ENCODE measurements at regions of chr22 and their contacts with region 1.

Region 1: DNA sequence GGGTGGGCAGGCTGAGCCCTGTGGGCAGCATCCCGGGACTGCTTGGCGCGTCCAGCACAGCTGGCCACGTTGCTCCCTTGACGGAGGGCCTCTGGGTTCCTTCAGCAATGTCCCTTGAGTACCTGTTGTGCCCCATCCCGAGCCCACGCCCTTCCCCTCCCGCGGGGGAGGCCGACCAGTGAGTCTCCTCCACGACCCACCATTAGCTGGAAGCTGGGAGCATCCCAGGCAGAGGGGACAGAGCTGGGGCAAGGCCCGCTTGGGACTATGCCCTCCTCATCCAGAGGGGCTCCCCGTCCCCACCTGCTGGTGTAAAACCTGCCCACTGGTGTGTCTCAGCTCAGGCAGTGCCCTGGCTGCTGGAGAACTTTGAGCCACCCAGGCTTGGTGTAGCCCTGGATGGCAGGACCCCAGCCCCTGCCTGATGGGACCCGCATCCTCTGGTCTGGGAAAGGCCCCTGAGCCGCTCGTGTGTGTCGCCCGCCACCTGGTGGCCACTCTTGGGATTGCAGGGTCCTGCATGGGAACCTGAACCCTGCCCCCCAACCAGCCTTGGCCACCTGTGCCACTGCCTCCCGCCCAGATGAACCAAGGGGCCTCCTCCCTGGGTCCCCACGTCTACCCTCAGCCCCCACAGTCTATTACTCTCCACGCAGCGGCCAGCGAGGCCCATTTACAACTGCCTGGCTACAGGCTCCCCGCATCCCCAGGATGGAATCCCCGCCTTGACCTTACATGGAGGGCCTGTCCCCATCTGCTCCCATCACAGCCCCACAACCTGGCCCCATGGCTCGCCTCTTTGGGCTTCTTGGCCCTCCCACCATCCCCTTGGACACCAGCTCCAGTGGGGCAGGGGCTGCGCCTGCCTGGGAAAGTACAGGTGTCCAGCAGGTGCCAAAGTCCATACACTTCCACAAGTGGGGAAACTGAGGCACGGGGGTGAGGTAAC is 16.6 kb upstream of the ARHGAP8 start:
- DNase-seq: peak; percentile 70 to 76 (median 73)
- ATAC-seq: peak; percentile 82
- H3K4me3 ChIP-seq: no peak overlapping the region
- H3K27ac ChIP-seq: no peak overlapping the region
- H3K4me1 ChIP-seq: peaks cover 0 to 50% of the 10 kb centered on the region in 2 experiments; a peak in 2 of 5 replicates
- H3K27me3 ChIP-seq: no peaks in the 10 kb centered on the region
- CTCF ChIP-seq: peak; percentile 75 to 85 (median 77)
- EP300 ChIP-seq: no peak
- POLR2A ChIP-seq: no peak; the same call in 1 of the 2 replicates
- RAD21 ChIP-seq: peak; percentile 41 to 77

Region 2: DNA sequence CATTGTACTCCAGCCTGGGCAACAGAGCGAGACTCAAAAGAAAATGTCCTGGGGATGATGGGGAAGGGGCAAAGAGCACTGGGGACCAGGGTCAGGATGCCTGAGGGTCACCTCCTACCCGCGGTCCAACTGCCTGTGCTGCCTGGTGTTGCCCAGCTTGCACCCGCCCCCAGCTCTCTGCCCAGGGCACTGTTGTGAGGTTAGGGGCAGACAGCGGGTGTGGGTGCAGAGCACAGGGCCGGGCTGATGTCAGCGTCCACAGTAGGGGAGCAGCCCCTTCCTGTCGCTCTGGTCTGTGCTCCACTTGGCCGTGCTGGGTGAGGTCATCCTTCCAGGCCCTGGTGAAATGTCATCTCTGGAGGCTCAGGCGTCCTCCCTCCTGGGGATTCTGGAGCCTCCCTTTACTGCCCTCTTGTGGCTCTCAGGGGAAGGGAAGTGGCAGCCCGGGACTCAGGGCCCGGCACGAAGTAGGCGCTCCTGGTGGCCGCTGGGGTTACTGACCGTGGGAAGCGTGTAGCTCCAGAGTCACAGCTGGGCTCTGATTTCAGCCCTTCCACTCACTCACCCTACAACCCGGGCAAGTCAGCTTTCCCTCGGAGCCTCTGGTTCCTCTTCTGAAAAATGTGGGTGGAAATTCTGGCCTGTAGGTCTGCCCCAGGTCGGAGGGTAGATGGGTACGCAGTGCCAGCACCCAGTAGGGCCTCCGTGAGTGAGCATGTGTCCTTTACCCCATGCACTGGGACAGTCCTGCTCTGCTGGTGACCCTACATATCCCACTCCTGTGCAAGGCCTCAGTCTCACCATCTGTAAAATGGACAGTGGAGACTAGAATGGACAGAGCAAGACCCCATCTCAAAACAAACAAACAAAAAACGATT is 51.1 kb before region 1 on chr22:
- CTCF ChIA-PET with region 1: interaction called, 22 read pairs
- POLR2A ChIA-PET with region 1: no interaction called
- in situ Hi-C with region 1: no loop called
- intact Hi-C with region 1: loop called (anchors 5 kb)
- DNase-seq: peak; percentile 80 to 93 (median 84)
- ATAC-seq: peak; percentile 95
- H3K4me3 ChIP-seq: no peak overlapping the region
- H3K27ac ChIP-seq: peak overlapping the region; percentile 81; the same call in 2 of the 3 replicates
- H3K4me1 ChIP-seq: peaks cover 29 to 56% of the 10 kb centered on the region in 2 experiments; a peak in 4 of 5 replicates
- H3K27me3 ChIP-seq: no peaks in the 10 kb centered on the region
- CTCF ChIP-seq: peak; percentile 98 to 100 (median 99)
- EP300 ChIP-seq: no peak; the same call in 1 of the 2 replicates
- POLR2A ChIP-seq: no peak
- RAD21 ChIP-seq: peak; percentile 17 to 73; a peak in 2 of 4 replicates

Region 3: GRCh38 chr22:44697423-44698141 is 38.2 kb before region 1 on chr22:
- CTCF ChIA-PET with region 1: interaction called, 31 read pairs
- POLR2A ChIA-PET with region 1: no interaction called
- in situ Hi-C with region 1: no loop called
- intact Hi-C with region 1: loop called (anchors 1 kb)
- DNase-seq: peak; percentile 64 to 74 (median 70)
- ATAC-seq: peak; percentile 80
- H3K4me3 ChIP-seq: no peak overlapping the region
- H3K27ac ChIP-seq: no peak overlapping the region
- H3K4me1 ChIP-seq: peaks cover 3 to 39% of the 10 kb centered on the region in 2 experiments; a peak in 4 of 5 replicates
- H3K27me3 ChIP-seq: no peaks in the 10 kb centered on the region
- CTCF ChIP-seq: peak; percentile 73 to 90 (median 79)
- EP300 ChIP-seq: no peak
- POLR2A ChIP-seq: no peak
- RAD21 ChIP-seq: peak; percentile 32 to 75